ENCODE measurements at regions of chr13 and their contacts with region 1.

Region 1: GRCh38 chr13:77477299-77477848 is 58.1 kb upstream of the SCEL start:
- DNase-seq: no peak
- ATAC-seq: peak in 1 of 2 donors; percentile 18

Region 2: DNA sequence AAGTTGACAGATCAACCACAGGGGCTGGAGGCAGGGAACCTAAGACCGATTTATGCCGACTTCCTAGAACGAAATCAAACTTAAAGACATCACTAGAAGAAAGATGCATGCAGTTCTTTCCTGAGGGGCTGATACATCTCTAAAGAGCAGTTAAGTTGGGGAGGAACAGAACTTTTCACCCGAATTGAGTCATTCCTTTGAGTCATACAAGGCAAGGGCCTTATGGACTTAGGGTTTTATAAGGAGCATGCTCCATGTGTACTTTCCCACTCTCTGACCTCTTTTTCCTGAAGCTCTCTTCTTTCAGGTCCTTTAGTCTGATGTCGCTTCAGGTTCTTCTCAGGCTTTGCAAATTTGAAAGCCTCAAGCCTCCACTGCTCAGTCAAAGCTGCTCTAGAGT is 442.5 kb before region 1 on chr13:
- intact Hi-C with region 1: no loop called
- DNase-seq: no peak
- ATAC-seq: no peak

Region 3: GRCh38 chr13:77274126-77274525 is 203.2 kb before region 1 on chr13:
- intact Hi-C with region 1: loop called in 1 of 2 experiments (anchors 10 kb)
- DNase-seq: no peak
- ATAC-seq: no peak

Region 4: GRCh38 chr13:77329133-77329910 is 148.1 kb before region 1 on chr13:
- intact Hi-C with region 1: loop called in 1 of 2 experiments (anchors 10 kb)
- DNase-seq: peak; percentile 83
- ATAC-seq: peak; percentile 81

Measured in left cardiac atrium (tissue), 4 donors.